PC-3 (cell line): ENCODE measurements at regions of chr1 and their contacts with region 1.

Region 1: GRCh38 chr1:246246430-246246829 is 260.6 kb downstream of the SMYD3 start:
- DNase-seq: peak; percentile 10
- ATAC-seq: no peak
- H3K4me3 ChIP-seq: no peak overlapping the region
- H3K27ac ChIP-seq: no peak overlapping the region
- H3K4me1 ChIP-seq: no peaks in the 10 kb centered on the region
- H3K27me3 ChIP-seq: no peaks in the 10 kb centered on the region
- CTCF ChIP-seq: peak; percentile 47; the same call in 1 of the 2 replicates

Region 2: DNA sequence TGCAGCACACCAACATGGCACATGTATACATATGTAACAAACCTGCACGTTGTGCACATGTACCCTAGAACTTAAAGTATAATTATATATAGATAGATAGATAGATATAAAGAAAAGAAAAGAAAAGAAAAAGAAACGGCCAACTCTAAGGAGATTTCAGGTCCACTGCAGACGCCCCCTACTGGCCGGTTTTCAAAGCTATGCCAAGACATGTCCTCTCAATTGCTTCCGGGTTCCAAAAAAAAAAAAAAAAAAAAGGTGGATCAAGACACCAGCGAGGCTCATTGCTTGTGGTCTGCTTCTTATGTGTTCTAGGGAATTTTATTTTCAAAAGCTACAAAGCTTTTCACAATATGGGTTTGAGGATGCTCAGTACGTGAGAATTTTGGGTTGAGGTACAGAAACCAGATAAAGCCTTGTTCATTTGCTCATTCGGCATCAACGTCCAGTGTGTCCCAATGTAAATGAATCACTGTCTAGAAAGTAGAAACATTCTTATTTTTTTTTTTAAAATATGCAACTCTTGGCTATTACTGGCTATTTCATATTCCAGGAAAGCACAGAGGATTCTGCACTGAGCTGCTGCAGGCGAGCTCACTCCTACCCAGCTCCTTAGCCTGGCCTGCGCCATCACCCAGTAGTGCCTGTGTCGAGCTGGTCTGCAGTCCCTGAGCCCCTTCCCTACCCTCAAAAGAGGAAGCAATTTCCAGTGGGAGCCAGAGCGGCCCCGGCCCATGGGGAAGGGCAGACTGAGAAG is 448.7 kb before region 1 on chr1:
- CTCF ChIA-PET with region 1: interaction called, 15 read pairs
- POLR2A ChIA-PET with region 1: no interaction called
- intact Hi-C with region 1: no loop called
- DNase-seq: peak; percentile 43
- ATAC-seq: no peak
- H3K4me3 ChIP-seq: no peak overlapping the region
- H3K27ac ChIP-seq: no peak overlapping the region
- H3K4me1 ChIP-seq: no peaks in the 10 kb centered on the region
- H3K27me3 ChIP-seq: no peaks in the 10 kb centered on the region
- CTCF ChIP-seq: peak; percentile 59

Region 3: DNA sequence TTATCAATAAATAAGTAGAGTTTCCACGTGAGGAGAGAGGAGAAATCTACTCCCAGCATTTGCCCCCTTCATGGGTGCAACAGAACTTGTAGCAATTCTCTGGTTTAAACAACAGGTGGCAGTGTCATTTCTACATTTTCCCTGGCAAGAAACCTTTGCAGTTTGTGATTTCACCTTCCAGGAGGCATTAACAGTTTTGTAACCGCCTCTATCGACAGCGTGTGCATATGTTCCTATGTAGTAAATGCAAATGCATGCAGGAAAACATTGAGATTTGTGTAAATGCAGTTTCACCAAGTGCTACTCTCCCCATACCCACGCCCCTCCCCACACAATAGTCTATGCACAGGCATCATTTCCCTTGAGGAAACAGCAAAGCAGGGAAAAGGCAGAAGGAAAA is 234.1 kb before region 1 on chr1:
- CTCF ChIA-PET with region 1: no interaction called
- POLR2A ChIA-PET with region 1: no interaction called
- intact Hi-C with region 1: loop called (anchors 10 kb)
- DNase-seq: peak; percentile 66
- ATAC-seq: peak; percentile 49
- H3K4me3 ChIP-seq: no peak overlapping the region
- H3K27ac ChIP-seq: no peak overlapping the region
- H3K4me1 ChIP-seq: no peaks in the 10 kb centered on the region
- H3K27me3 ChIP-seq: no peaks in the 10 kb centered on the region
- CTCF ChIP-seq: peak; percentile 85